ENCODE measurements at regions of chr1 and their contacts with region 1.

Region 1: DNA sequence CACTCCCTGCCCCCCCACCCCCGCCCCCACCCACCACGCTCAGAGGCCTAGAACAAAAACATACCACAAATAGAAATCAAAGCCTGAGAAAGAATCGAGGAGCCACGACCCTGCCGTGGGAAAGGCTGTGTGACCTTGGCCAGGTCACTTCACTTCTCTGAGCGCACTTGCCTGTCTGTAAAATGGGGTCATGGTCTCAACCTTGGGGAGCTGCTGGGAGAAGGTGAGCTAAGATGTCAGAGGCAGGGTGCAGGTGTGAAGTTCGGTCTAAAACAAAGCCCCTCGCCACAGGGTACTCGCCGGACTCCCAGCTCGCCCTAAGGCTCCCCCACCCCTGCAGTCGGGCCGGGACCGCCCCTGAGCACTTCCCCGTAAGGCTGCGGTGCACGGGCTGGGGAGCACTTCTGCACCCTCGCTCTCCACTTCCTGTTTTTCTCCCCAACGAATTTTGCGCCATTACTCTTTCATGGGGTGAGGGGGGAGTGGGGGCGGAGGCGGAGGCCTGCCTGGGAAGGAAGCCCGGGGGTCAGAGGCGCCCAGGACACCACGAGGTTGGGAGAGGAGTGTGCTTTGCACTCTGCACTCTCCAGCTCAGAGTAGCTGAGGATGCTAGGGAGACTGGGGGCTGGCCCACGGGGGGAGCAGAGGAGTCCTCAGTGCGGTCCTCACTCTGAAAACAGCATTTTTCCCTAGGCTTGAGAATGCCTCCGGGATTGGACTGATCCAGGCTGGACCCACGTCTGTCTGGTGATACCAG is 21.9 kb upstream of the PIK3CD start:
- DNase-seq: peak; percentile 73 to 82 (median 78)
- H3K4me3 ChIP-seq: peak overlapping the region; percentile 95
- H3K4me3 Mint-ChIP-seq: peak overlapping the region; percentile 87 to 96 (median 92)
- H3K27ac ChIP-seq: peak overlapping the region; percentile 75
- H3K27ac Mint-ChIP-seq: peak overlapping the region; percentile 81 to 98 (median 88)
- H3K4me1 ChIP-seq: peaks cover 78% of the 10 kb centered on the region
- H3K4me1 Mint-ChIP-seq: peaks cover 29 to 85% (median 52%) of the 10 kb centered on the region in 4 donors
- H3K27me3 ChIP-seq: no peaks in the 10 kb centered on the region
- H3K27me3 Mint-ChIP-seq: no peaks in the 10 kb centered on the region

Region 2: GRCh38 chr1:9603766-9604753 is 25.6 kb before region 1 on chr1:
- CTCF ChIA-PET with region 1: no interaction called
- POLR2A ChIA-PET with region 1: no interaction called
- intact Hi-C with region 1: no loop called
- DNase-seq: peak in 1 of 5 donors; percentile 30
- H3K4me3 ChIP-seq: no peak overlapping the region
- H3K4me3 Mint-ChIP-seq: no peak overlapping the region
- H3K27ac ChIP-seq: no peak overlapping the region
- H3K27ac Mint-ChIP-seq: peak overlapping the region in 3 of 7 donors; percentile 6 to 35 (median 17)
- H3K4me1 ChIP-seq: no peaks in the 10 kb centered on the region
- H3K4me1 Mint-ChIP-seq: no peaks in the 10 kb centered on the region
- H3K27me3 ChIP-seq: no peaks in the 10 kb centered on the region
- H3K27me3 Mint-ChIP-seq: no peaks in the 10 kb centered on the region

Region 3: DNA sequence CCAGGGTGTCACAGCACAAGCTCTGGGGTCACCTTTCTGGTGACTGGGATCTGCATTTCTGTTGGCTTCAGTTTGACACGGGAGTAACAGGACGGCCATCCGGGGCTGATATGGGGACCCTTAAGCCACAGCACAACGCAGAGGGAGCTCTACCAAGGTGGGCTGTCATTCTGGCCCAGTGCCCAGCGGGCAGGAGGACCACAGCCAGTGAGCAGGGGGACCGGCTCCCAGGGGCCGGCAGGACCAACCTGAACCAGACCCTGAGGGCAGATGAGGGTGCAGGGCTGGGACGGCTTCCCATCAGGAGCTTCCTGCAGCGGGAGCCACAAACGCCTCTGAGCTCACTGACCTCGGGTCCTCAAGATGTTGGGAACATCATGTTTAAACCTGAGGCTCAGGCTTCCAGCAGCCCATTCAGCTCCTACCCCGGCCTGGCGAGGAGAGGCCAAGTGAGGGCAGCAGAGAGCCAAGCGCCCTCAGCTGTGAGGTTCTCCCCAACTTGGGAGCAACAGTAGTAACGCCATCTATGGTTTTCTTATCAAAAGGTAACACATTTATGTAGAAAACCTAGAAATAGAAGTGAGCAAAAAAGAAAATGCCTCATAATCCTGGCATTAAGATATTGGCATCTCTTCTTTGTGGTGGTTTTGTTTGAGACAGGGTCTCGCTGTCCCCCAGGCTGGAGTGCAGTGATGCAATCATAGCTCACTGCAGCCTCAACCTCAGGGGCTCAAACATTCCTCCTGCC is 14.1 kb before region 1 on chr1:
- CTCF ChIA-PET with region 1: interaction called, 16 read pairs
- POLR2A ChIA-PET with region 1: interaction called, 8 read pairs
- intact Hi-C with region 1: no loop called
- DNase-seq: peak in 4 of 5 donors; percentile 42 to 51 (median 50)
- H3K4me3 ChIP-seq: no peak overlapping the region
- H3K4me3 Mint-ChIP-seq: no peak overlapping the region
- H3K27ac ChIP-seq: no peak overlapping the region
- H3K27ac Mint-ChIP-seq: no peak overlapping the region
- H3K4me1 ChIP-seq: peaks cover 6% of the 10 kb centered on the region
- H3K4me1 Mint-ChIP-seq: no peaks in the 10 kb centered on the region
- H3K27me3 ChIP-seq: no peaks in the 10 kb centered on the region
- H3K27me3 Mint-ChIP-seq: peaks cover 0 to 5% of the 10 kb centered on the region in 2 donors

Region 4: DNA sequence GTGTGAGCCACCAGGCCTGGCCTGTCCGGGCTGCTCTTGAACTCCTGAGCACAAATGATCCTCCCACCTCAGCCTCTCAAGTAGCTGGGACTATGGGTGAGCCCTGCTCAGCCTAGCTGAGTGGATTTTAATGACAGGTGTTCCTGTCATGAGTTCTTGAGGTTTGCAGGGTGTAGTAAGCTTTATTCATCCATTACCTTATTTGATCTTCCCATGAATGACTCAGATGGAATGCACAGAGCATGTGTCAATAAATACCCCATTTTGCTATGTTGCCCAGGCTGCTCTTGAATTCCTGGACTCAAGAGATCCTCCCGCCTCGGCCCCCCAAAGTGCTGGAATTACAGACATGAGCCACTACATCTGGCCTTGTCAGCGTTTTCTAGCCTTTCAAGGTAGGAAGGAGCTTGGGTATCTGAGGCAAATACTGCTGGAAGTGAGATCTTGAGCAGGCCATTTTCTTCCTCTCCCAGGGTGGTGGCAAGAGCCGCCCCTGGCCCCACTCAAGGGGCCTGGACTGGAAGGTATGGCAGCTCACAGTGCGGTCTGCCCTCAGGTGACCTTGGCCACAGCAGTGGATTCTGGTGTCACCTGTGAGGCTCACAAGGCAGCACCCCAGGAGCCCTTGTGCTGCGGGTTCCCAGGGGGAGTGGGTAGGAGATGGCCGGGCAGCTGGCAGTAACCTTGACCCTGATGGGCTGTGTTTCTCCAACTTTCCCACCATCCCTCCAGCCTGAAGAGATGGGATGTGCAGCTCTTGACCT is 41.9 kb after region 1 on chr1:
- CTCF ChIA-PET with region 1: interaction called, 13 read pairs
- POLR2A ChIA-PET with region 1: interaction called, 8 read pairs
- intact Hi-C with region 1: loop called (anchors 5 kb)
- DNase-seq: no peak
- H3K4me3 ChIP-seq: no peak overlapping the region
- H3K4me3 Mint-ChIP-seq: peak overlapping the region in 2 of 8 donors; percentile 20 to 61
- H3K27ac ChIP-seq: peak overlapping the region; percentile 2
- H3K27ac Mint-ChIP-seq: peak overlapping the region; percentile 6 to 90 (median 75)
- H3K4me1 ChIP-seq: peaks cover 62% of the 10 kb centered on the region
- H3K4me1 Mint-ChIP-seq: peaks cover 29 to 68% (median 50%) of the 10 kb centered on the region in 4 donors
- H3K27me3 ChIP-seq: no peaks in the 10 kb centered on the region
- H3K27me3 Mint-ChIP-seq: no peaks in the 10 kb centered on the region

Region 5: DNA sequence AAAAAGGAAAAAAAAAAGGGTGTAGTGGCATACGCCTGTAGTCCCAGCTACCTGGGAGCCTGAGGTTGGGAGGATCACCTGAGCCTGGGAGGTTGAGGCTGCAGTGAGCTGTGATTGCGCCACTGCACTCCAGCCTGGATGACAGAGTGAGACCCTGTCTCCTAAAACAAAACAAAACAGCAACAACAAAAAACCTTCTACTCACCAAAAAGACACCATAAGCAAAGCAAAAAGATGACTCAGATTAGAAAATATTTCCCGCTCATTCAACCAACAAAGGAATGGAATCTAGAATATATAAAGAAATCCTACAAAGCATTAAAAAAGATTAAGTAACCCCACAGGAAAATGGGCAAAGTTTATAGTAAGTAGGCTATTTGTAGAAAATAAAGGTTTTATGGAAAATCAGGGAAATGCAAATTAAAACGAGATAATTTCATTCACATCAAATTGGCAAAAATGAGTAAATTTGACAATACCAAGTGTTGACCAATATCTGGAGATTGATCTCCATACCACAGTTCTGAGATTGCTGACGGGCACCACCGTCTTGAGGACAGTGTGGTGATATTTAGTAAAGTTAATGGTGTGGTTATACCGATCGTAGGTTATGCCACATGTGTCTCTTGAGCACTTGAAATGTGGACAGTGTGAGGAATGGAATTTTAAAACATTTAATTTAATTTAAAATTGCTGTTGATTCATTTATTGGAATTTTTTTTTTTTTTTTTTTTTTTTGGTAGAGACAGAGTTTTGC is 75.9 kb after region 1 on chr1:
- CTCF ChIA-PET with region 1: interaction called, 23 read pairs
- POLR2A ChIA-PET with region 1: interaction called, 403 read pairs
- intact Hi-C with region 1: no loop called
- DNase-seq: no peak
- H3K4me3 ChIP-seq: no peak overlapping the region
- H3K4me3 Mint-ChIP-seq: peak overlapping the region in 6 of 8 donors; percentile 30 to 75 (median 50)
- H3K27ac ChIP-seq: no peak overlapping the region
- H3K27ac Mint-ChIP-seq: peak overlapping the region; percentile 20 to 78 (median 66)
- H3K4me1 ChIP-seq: peaks cover 62% of the 10 kb centered on the region
- H3K4me1 Mint-ChIP-seq: peaks cover 42 to 82% (median 61%) of the 10 kb centered on the region in 4 donors
- H3K27me3 ChIP-seq: no peaks in the 10 kb centered on the region
- H3K27me3 Mint-ChIP-seq: no peaks in the 10 kb centered on the region

Region 6: DNA sequence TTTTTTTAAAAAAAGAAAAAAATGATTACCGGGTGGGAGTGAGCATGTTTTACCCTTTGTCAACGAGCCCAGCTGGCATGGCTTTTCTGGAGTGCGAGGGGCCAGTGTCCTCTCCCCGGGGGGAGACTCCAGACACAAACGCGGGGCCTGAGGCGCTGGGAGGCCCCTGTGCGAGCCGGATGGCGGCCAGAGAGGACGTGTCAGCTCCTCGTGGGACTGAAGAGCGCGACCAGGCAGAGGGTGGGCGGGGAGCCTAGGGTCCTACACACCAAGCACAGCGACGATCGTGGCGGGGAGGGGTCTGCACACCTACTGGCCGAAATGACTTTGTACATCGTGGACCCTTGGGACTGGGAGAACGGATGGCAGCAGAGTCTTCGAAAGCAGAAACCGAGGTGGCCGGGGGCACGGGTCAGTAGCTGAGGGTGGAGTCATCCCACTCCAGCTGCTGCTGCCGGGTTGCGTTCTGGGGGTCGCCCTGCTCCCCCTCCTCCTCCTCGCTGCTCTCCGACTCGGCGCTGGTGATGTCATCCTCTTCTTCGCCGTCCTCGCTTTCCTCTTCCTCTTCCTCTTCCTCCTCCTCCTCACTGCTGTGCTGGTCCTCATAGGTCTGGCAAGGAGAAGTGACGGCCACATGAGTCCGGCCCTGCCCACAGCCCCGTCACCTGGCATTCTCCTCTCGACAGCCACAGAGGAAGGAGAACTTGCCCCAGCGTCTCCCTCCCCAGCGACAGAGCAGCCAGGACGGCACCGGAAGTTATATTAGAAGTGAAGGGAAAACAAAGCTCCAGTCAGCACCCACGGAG is 100.7 kb after region 1 on chr1:
- CTCF ChIA-PET with region 1: interaction called, 219 read pairs
- POLR2A ChIA-PET with region 1: interaction called, 31 read pairs
- intact Hi-C with region 1: loop called (anchors 1 kb)
- DNase-seq: no peak
- H3K4me3 ChIP-seq: no peak overlapping the region
- H3K4me3 Mint-ChIP-seq: peak overlapping the region in 7 of 8 donors; percentile 22 to 71 (median 49)
- H3K27ac ChIP-seq: no peak overlapping the region
- H3K27ac Mint-ChIP-seq: peak overlapping the region; percentile 68 to 93 (median 90)
- H3K4me1 ChIP-seq: peaks cover 41% of the 10 kb centered on the region
- H3K4me1 Mint-ChIP-seq: peaks cover 23 to 68% (median 49%) of the 10 kb centered on the region in 4 donors
- H3K27me3 ChIP-seq: no peaks in the 10 kb centered on the region
- H3K27me3 Mint-ChIP-seq: no peaks in the 10 kb centered on the region

Region 7: GRCh38 chr1:9942939-9943788 is 313.5 kb after region 1 on chr1 and contains the starts of genes LZIC and NMNAT1:
- CTCF ChIA-PET with region 1: no interaction called
- POLR2A ChIA-PET with region 1: interaction called, 4 read pairs
- intact Hi-C with region 1: loop called (anchors 5 kb)
- DNase-seq: peak; percentile 84 to 90 (median 85)
- H3K4me3 ChIP-seq: peak within 1 kb of the TSS; percentile 91 to 100
- H3K4me3 Mint-ChIP-seq: peak within 1 kb of the TSS; percentile 94 to 97 (median 97)
- H3K27ac ChIP-seq: peak within 1 kb of the TSS; percentile 92
- H3K27ac Mint-ChIP-seq: peak within 1 kb of the TSS; percentile 89 to 99 (median 98)
- H3K4me1 ChIP-seq: peaks cover 18% of the 10 kb centered on the region
- H3K4me1 Mint-ChIP-seq: peaks cover 11 to 35% (median 21%) of the 10 kb centered on the region in 4 donors
- H3K27me3 ChIP-seq: no peaks in the 10 kb centered on the region
- H3K27me3 Mint-ChIP-seq: no peaks in the 10 kb centered on the region
- total RNA-seq, gene LZIC: 34.0 to 34.8 TPM
- total RNA-seq, gene NMNAT1: 6.1 to 6.7 TPM

Measured in CD4-positive, alpha-beta memory T cell (primary cell).